ENCODE measurements at regions of chr16 and their contacts with region 1.

Region 1: GRCh38 chr16:69116906-69117305 is 11.5 kb downstream of the HAS3 start:
- DNase-seq: peak; percentile 11
- H3K4me3 ChIP-seq: no peak overlapping the region
- H3K27ac ChIP-seq: no peak overlapping the region
- H3K4me1 ChIP-seq: peaks cover 0 to 36% (median 2%) of the 10 kb centered on the region in 6 donors
- H3K27me3 ChIP-seq: no peaks in the 10 kb centered on the region
- CTCF ChIP-seq: no peak
- POLR2A ChIP-seq: no peak

Region 2: GRCh38 chr16:68851601-68852000 is 265.3 kb before region 1 on chr16:
- intact Hi-C with region 1: loop called (anchors 5 kb)
- DNase-seq: no peak
- H3K4me3 ChIP-seq: no peak overlapping the region
- H3K27ac ChIP-seq: no peak overlapping the region
- H3K4me1 ChIP-seq: peaks cover 5 to 36% (median 9%) of the 10 kb centered on the region in 6 donors
- H3K27me3 ChIP-seq: no peaks in the 10 kb centered on the region
- CTCF ChIP-seq: no peak
- POLR2A ChIP-seq: no peak

Region 3: DNA sequence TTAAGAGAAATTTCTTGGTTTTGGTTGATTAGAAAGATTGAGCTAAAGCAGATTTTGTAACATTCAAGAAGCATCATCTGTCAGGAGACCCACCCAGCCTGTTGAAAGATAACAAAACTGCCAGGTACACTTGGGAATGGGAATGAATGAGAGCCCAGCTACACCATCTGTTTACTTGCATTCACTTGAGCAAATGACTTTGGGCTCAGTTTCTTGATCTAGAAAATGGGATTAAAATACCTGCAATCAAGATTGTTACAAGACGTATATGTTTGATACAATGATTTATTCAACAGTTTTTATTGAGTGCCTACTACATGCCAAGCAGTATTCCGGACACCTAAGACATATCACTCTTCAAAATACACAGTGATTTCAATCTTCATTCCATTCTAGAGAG is 87.8 kb before region 1 on chr16:
- intact Hi-C with region 1: no loop called
- DNase-seq: no peak
- H3K4me3 ChIP-seq: no peak overlapping the region
- H3K27ac ChIP-seq: no peak overlapping the region
- H3K4me1 ChIP-seq: no peaks in the 10 kb centered on the region
- H3K27me3 ChIP-seq: no peaks in the 10 kb centered on the region
- CTCF ChIP-seq: no peak
- POLR2A ChIP-seq: no peak